Calu3 (cell line): ENCODE measurements at regions of chr12 and their contacts with region 1.

Region 1: GRCh38 chr12:56677680-56678079 is 10.4 kb downstream of the PTGES3 start:
- DNase-seq: no peak
- H3K4me3 Mint-ChIP-seq: no peak overlapping the region
- H3K27ac Mint-ChIP-seq: no peak overlapping the region
- H3K4me1 Mint-ChIP-seq: peaks cover 18% of the 10 kb centered on the region
- H3K27me3 Mint-ChIP-seq: no peaks in the 10 kb centered on the region
- CTCF ChIP-seq: no peak

Region 2: DNA sequence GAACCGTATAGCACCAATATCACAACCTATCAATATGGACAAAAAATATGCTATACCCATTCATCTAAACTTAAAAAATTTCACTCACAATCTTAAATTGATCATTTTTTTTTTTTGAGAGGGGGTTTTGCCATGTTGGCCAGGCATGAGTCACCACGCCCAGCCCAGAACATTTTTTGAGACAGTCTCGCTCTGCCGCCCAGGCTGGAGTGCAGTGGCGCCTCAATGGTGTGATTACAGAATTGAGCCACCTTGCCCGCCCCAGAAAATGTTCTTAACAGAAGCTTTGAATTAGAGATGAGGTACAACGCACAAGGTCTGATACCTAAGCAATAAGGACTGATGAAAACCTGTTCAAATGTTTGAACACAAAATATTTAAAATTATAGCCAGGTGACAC is 16.1 kb before region 1 on chr12:
- CTCF ChIA-PET with region 1: interaction called, 7 read pairs
- intact Hi-C with region 1: loop called (anchors 2 kb)
- DNase-seq: no peak
- H3K4me3 Mint-ChIP-seq: no peak overlapping the region
- H3K27ac Mint-ChIP-seq: peak overlapping the region; percentile 50
- H3K4me1 Mint-ChIP-seq: peaks cover 8% of the 10 kb centered on the region
- H3K27me3 Mint-ChIP-seq: no peaks in the 10 kb centered on the region
- CTCF ChIP-seq: no peak